Posterior vena cava (tissue), 2 donors: ENCODE measurements at regions of chr6 and their contacts with region 1.

Region 1: GRCh38 chr6:163253556-163254213 is 160.8 kb upstream of the QKI start:
- DNase-seq: no peak

Region 2: DNA sequence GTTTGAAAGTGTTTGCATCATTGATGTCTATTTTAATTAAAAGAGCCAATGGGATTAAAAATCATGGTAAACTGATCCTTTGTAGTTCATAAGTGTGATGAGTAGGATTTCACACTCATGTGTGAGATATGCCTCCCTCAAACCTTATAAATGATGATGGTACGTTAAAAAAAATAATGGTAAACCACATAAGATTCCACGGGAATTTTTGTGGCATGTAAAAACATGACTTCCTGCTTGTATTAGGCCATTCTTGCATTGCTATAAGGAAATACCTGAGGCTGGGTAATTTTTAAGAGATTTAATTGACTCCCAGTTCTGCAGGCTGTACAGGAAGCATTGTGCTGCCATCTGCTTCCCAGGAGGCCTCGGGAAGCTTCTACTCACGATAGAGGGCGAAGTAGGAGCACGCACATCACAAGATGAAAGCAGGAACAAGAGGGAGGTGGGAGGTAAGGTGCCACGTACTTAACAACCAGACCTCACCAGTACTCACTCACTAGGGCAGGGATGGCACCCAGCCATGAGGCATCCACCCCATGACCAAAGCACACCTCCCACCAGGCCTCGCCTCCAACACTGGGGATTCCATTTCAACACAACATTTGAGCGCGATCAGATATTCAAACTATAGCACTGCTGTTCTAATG is 26.7 kb before region 1 on chr6:
- intact Hi-C with region 1: loop called in 1 of 2 experiments (anchors 1 kb)
- DNase-seq: no peak